WTC11 (cell line): ENCODE measurements at regions of chr2 and their contacts with region 1.

Region 1: DNA sequence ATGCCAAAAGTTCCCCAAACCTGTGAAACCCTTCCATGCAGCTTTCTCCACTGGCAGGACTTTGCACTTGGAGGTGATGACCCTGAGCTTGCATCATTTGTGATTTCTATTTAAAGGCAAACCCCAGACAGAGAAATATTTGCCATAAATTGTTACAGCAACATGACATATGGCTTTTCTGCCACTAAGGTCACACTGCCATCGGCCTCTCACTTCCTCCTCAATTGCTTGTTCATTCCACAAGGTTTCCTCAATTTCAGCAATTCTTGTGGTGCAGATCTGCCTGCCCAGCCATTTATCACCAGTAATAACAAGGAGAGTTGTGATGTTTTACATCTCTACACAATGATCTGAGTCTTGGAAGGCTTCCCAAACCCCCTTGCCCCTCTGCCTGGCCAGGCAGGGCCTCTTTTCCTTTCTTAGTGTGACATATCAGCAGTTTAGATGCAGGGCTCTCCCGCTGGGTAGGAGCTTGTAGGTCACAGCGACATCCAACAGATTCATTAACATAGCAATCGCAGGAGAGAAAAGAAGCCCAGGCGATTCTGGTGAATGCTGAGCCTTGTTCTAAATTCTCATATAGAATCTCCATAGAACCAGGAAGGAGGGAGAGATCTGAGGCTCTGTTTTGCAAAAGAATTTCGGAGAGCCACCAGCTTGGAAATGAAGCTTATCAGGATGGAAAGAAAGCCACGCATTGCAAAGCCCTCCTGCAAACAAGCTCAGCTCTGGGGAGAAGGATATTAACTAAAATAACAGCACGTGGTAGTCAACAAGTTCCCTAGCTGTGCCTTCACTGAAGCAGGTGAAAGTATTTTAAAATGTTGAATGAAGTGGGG is 46.7 kb upstream of the ITGA6 start:
- DNase-seq: peak; percentile 75
- ATAC-seq: peak; percentile 85
- H3K4me3 Mint-ChIP-seq: peak overlapping the region; percentile 47
- H3K27ac Mint-ChIP-seq: peak overlapping the region; percentile 100
- H3K4me1 Mint-ChIP-seq: peaks cover 71% of the 10 kb centered on the region
- H3K27me3 Mint-ChIP-seq: peaks cover 33% of the 10 kb centered on the region
- CTCF ChIP-seq: no peak

Region 2: DNA sequence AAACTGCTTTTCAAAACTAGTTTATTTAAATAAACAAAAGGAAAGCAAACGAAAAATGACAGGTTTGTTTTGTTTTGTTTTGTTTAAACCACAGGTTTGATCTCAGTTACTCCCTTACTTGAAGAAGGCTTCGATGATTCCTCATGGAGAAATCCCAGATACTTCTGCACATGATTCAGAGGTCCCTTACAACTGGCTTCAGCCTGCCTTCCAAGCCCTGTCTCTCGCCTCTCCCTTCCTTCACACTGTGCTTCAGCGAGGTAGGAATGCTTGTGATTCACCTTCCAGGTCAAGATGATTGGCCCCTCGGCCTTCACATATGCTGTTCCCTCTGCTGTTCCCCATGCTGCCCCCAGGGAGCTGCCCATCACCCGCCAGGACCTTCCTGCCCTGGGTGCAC is 57.4 kb before region 1 on chr2:
- CTCF ChIA-PET with region 1: no interaction called
- POLR2A ChIA-PET with region 1: no interaction called
- DNase-seq: no peak
- ATAC-seq: no peak
- H3K4me3 Mint-ChIP-seq: no peak overlapping the region
- H3K27ac Mint-ChIP-seq: no peak overlapping the region
- H3K4me1 Mint-ChIP-seq: no peaks in the 10 kb centered on the region
- H3K27me3 Mint-ChIP-seq: peaks cover 3% of the 10 kb centered on the region
- CTCF ChIP-seq: no peak

Region 3: GRCh38 chr2:172397148-172397834 is 16.6 kb after region 1 on chr2:
- CTCF ChIA-PET with region 1: interaction called, 11 read pairs
- POLR2A ChIA-PET with region 1: no interaction called
- DNase-seq: no peak
- ATAC-seq: no peak
- H3K4me3 Mint-ChIP-seq: no peak overlapping the region
- H3K27ac Mint-ChIP-seq: no peak overlapping the region
- H3K4me1 Mint-ChIP-seq: peaks cover 12% of the 10 kb centered on the region
- H3K27me3 Mint-ChIP-seq: peaks cover 7% of the 10 kb centered on the region
- CTCF ChIP-seq: no peak

Region 4: DNA sequence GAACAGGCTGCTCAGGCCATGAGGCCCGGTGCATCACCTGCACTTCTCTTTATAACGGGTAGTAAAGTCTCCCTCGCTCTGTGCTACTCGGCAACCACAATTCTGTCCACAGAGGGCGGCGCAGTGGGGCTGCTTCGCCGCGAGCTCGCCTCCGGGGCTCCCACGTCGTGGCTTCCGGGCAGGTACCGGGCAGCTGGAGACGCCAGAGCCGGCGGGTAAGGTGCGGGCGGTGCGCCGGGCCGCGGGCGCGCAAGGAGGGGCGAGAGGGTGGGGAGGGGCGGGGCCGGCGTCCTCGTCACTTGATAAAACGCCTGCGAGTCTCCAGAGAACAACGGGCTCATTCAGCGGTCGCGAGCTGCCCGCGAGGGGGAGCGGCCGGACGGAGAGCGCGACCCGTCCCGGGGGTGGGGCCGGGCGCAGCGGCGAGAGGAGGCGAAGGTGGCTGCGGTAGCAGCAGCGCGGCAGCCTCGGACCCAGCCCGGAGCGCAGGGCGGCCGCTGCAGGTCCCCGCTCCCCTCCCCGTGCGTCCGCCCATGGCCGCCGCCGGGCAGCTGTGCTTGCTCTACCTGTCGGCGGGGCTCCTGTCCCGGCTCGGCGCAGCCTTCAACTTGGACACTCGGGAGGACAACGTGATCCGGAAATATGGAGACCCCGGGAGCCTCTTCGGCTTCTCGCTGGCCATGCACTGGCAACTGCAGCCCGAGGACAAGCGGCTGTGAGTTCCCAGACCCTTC is 46.8 kb after region 1 on chr2 and contains the start of gene ITGA6:
- CTCF ChIA-PET with region 1: interaction called, 11 read pairs
- POLR2A ChIA-PET with region 1: interaction called, 12 read pairs
- DNase-seq: peak; percentile 79
- ATAC-seq: peak; percentile 66
- H3K4me3 Mint-ChIP-seq: peak within 1 kb of the TSS; percentile 91
- H3K27ac Mint-ChIP-seq: peak within 1 kb of the TSS; percentile 87
- H3K4me1 Mint-ChIP-seq: peaks cover 28% of the 10 kb centered on the region
- H3K27me3 Mint-ChIP-seq: peaks cover 13% of the 10 kb centered on the region
- CTCF ChIP-seq: no peak
- total RNA-seq, gene ITGA6: 78.8 to 83.6 TPM (median 82.4 TPM) in 3 replicates